MCF 10A (cell line): ENCODE measurements at regions of chr20 and their contacts with region 1.

Region 1: DNA sequence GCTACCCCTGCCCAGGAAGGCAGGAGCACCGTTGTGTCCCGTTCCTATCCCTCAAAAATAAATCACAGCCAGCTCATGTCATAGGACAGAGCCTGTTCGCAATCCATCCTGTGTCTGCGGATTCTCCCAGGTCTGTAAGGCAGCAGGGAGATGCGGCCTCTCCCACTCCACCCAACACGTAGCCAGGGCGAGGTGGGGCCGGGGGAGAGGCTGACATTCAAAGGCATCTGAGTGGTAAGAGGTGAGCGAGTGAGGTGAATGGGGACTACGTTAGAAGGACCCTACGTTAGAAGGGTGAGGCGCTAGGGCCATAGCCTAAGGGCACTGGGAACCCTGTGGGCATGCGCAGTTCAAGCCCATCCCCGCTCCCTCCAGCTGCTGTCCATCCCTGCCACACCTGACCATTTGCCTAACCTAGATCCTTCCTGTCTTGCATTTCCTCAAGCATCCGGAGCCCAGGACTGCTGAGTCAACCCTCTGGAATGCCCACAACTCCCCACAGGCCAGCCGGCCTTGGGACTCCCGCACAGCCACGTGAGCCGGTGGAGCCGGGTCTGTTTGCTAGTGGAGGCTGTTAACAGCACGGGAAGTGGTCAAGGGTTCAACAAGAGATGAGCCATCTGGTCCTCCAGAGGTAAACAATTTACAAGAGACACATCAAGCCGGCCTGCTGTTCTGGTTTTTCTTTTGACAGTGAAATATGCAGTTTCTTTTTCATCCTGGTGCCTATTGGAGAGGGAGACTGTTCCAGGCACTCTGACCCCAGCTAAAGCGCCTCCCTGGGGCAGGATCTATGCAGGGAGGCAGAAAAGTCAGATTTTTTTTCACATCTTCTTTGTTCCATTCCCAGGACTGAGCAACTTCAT is 45.9 kb downstream of the RIPOR3 start:
- DNase-seq: peak; percentile 93
- H3K4me3 Mint-ChIP-seq: peak overlapping the region; percentile 52
- H3K27ac Mint-ChIP-seq: peak overlapping the region; percentile 93
- H3K4me1 Mint-ChIP-seq: peaks cover 14% of the 10 kb centered on the region
- H3K27me3 Mint-ChIP-seq: no peaks in the 10 kb centered on the region
- CTCF ChIP-seq: no peak

Region 2: DNA sequence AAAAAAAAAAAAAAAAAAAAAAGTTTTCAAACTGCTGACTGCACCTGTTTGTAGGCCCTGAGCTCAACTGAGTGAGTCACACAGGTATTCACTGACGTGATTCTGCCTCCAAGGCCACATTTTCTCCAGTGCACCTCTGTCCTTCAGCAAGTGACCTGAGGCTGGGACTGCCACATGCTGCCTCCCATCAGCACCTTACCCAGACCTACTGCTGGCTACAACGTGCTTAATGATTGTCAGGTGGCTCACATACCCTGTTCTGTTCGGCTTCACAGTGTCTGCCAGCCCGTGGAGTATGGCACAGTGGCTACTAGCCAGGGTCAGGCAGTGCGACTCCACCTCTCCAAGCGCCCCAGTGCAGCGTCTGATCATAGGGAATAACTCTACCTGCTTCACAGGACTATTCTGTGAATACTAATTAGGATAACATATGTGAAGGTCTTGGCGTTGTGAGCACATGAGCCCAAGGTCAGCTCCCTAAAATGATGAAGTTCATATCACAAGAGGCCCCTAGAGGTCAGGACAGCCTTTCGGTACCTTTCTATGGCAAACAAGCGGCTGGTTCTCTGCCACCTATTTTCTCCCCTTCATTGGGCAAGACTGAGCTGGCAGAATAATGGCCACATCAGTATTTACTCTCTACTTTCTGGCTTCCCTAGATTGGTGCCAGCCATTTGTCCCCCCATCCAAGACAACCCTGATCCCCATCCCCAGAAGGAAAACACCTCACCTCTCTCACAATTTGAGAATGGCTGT is 17.8 kb after region 1 on chr20:
- CTCF ChIA-PET with region 1: interaction called, 9 read pairs
- POLR2A ChIA-PET with region 1: interaction called, 16 read pairs
- intact Hi-C with region 1: no loop called
- DNase-seq: peak; percentile 84
- H3K4me3 Mint-ChIP-seq: no peak overlapping the region
- H3K27ac Mint-ChIP-seq: peak overlapping the region; percentile 53
- H3K4me1 Mint-ChIP-seq: peaks cover 21% of the 10 kb centered on the region
- H3K27me3 Mint-ChIP-seq: no peaks in the 10 kb centered on the region
- CTCF ChIP-seq: peak; percentile 60